Mammary epithelial cell (primary cell): ENCODE measurements at regions of chr3 and their contacts with region 1.

Region 1: DNA sequence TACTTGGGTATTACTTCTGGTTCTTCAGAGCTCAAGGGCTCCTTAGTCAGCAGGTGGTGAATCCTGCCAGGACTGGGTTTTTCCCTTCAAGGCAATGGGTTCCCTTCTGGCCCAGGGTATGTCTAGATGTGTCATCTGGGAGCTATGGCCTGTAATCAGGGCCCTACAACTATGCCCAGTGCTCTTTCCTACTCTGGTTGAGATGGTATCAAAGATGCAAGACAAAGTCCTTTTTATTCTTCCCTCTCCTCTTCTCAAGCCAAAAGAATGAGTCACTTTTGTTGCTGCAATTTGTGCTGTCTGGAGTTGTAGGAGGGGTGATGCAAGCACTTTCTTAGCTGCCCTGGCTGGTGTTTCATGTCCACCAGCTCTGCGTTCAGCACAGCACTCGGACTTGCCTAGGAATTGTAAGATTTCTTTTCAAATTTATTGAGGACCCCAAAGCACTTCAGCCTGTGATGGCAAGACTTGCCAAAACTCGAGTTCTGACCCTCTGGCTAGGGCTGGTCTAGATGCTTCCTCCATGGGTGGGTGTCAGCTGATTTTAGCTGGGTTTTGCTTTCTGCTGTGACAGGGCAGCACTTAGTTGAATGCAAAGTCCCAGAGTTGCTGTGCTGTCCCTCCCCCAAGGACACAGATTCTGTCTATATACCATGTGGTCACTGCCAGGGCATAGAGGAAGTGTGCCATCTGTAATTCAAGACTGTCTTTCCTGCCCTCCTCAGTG is 129.2 kb upstream of the CBLB start:
- DNase-seq: peak; percentile 100
- H3K4me3 ChIP-seq: peak overlapping the region; percentile 29 to 35 (median 33)
- H3K27ac ChIP-seq: peak overlapping the region; percentile 96
- H3K4me1 ChIP-seq: peaks cover 22% of the 10 kb centered on the region
- H3K27me3 ChIP-seq: no peaks in the 10 kb centered on the region
- CTCF ChIP-seq: no peak

Region 2: GRCh38 chr3:104126864-104127553 is 1871.0 kb before region 1 on chr3:
- CTCF ChIA-PET with region 1: no interaction called
- dilution Hi-C with region 1: no loop called
- in situ Hi-C with region 1: no loop called
- intact Hi-C with region 1: no loop called
- DNase-seq: no peak
- H3K4me3 ChIP-seq: no peak overlapping the region
- H3K27ac ChIP-seq: no peak overlapping the region
- H3K4me1 ChIP-seq: no peaks in the 10 kb centered on the region
- H3K27me3 ChIP-seq: no peaks in the 10 kb centered on the region
- CTCF ChIP-seq: no peak

Region 3: GRCh38 chr3:105944721-105945120 is 53.2 kb before region 1 on chr3:
- CTCF ChIA-PET with region 1: no interaction called
- dilution Hi-C with region 1: no loop called
- in situ Hi-C with region 1: no loop called
- intact Hi-C with region 1: loop called (anchors 2 kb)
- DNase-seq: peak; percentile 94
- H3K4me3 ChIP-seq: peak overlapping the region in 1 of 3 experiments; percentile 6
- H3K27ac ChIP-seq: peak overlapping the region; percentile 96
- H3K4me1 ChIP-seq: peaks cover 12% of the 10 kb centered on the region
- H3K27me3 ChIP-seq: no peaks in the 10 kb centered on the region
- CTCF ChIP-seq: no peak

Region 4: GRCh38 chr3:106058475-106058874 is 60.5 kb after region 1 on chr3:
- CTCF ChIA-PET with region 1: no interaction called
- dilution Hi-C with region 1: no loop called
- in situ Hi-C with region 1: no loop called
- intact Hi-C with region 1: no loop called
- DNase-seq: no peak
- H3K4me3 ChIP-seq: no peak overlapping the region
- H3K27ac ChIP-seq: no peak overlapping the region
- H3K4me1 ChIP-seq: no peaks in the 10 kb centered on the region
- H3K27me3 ChIP-seq: no peaks in the 10 kb centered on the region
- CTCF ChIP-seq: no peak

Region 5: GRCh38 chr3:106086636-106087035 is 88.7 kb after region 1 on chr3:
- CTCF ChIA-PET with region 1: no interaction called
- dilution Hi-C with region 1: no loop called
- in situ Hi-C with region 1: no loop called
- intact Hi-C with region 1: no loop called
- DNase-seq: peak; percentile 35
- H3K4me3 ChIP-seq: no peak overlapping the region
- H3K27ac ChIP-seq: no peak overlapping the region
- H3K4me1 ChIP-seq: no peaks in the 10 kb centered on the region
- H3K27me3 ChIP-seq: no peaks in the 10 kb centered on the region
- CTCF ChIP-seq: no peak

Region 6: DNA sequence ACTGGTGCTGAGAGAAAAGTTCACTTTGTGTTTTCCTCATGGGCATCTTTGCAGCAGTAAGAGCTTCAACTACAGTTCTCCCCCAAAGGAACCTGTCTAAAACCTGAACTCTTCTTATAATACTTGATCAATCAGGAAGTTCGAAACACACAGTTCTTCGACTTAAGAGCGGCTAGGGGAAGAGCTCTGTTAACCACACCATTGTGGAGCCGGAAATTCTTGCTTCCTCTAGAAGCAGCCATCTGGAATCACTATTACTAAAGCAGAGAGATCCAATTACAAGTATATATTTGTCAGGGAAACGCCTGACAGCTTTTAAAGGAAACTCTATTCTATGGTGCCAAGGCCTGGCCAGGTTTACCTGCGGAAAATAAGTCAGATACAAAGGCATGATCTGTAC is 208.2 kb after region 1 on chr3:
- CTCF ChIA-PET with region 1: no interaction called
- dilution Hi-C with region 1: no loop called
- in situ Hi-C with region 1: no loop called
- intact Hi-C with region 1: loop called (anchors 1 kb)
- DNase-seq: no peak
- H3K4me3 ChIP-seq: no peak overlapping the region
- H3K27ac ChIP-seq: no peak overlapping the region
- H3K4me1 ChIP-seq: no peaks in the 10 kb centered on the region
- H3K27me3 ChIP-seq: no peaks in the 10 kb centered on the region
- CTCF ChIP-seq: no peak